ENCODE measurements at regions of chr11 and their contacts with region 1.

Region 1: DNA sequence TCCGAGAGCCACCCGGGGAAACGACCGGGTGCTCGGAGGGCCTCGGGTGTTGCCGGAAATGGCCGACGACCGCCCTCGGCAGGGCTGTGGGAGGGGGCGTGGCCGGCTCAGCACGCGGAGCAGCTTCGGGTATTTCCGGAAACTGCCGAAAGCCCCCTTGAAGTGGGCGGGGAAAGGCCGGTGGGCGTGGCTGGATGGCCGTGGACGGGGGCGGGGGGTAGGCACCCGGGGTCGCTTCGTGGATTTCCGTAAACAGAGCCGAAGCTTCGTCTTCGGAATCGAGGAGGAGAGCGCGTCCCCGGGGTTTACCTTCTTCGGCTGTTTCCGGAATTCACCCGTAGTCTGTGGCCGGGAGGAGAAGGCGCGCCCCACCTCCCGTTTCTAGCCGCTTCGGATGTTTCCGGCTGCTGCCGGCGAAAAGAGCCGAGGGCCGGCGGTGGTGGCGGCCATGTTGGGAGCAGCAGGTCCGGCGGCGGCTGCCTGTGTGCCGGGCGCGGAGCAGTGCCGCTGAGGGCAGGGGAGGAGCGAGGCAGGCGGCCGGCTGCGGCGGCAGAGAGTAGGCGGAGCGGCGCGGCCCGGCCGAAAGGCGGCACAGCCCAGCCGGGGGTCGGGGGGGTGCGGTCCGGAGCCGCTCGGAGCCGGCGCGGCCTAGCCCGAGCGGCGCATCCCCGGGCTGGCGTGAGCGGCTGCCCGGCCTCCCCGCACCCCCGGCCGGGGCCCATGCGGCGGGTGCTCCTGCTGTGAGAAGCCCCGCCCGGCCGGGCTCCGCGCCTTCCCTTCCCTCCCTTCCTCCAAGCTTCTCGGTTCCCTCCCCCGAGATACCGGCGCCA is at the start of gene MARK2:
- DNase-seq: peak; percentile 100
- H3K4me3 Mint-ChIP-seq: peak within 1 kb of the TSS; percentile 87
- H3K27ac Mint-ChIP-seq: peak within 1 kb of the TSS; percentile 85
- H3K4me1 Mint-ChIP-seq: peaks cover 49% of the 10 kb centered on the region
- H3K27me3 Mint-ChIP-seq: no peaks in the 10 kb centered on the region
- total RNA-seq, gene MARK2: 48.7 to 54.2 TPM

Region 2: DNA sequence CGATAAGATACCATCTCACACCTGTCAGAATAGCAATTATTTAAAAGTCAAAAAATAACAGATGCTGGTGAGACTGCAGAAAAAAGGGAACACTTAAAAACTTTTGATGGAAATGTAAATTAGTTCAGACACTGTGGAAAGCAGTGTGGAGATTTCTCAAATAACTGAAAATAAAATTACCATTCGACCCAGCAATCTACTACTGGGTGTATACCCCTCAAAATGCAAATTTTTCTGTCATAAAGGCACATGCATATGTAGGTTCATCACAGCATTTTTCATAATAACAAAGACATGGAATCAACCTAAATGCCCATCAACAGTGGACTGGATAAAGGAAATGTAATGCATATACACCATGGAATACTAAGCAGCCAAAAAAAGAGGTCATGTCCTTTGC is 458.8 kb before region 1 on chr11:
- CTCF ChIA-PET with region 1: no interaction called
- POLR2A ChIA-PET with region 1: no interaction called
- DNase-seq: no peak
- H3K4me3 Mint-ChIP-seq: no peak overlapping the region
- H3K27ac Mint-ChIP-seq: no peak overlapping the region
- H3K4me1 Mint-ChIP-seq: no peaks in the 10 kb centered on the region
- H3K27me3 Mint-ChIP-seq: peaks cover 30% of the 10 kb centered on the region

Region 3: GRCh38 chr11:63698976-63699733 is 139.7 kb before region 1 on chr11:
- CTCF ChIA-PET with region 1: no interaction called
- POLR2A ChIA-PET with region 1: no interaction called
- DNase-seq: no peak
- H3K4me3 Mint-ChIP-seq: no peak overlapping the region
- H3K27ac Mint-ChIP-seq: no peak overlapping the region
- H3K4me1 Mint-ChIP-seq: peaks cover 2% of the 10 kb centered on the region
- H3K27me3 Mint-ChIP-seq: no peaks in the 10 kb centered on the region

Region 4: DNA sequence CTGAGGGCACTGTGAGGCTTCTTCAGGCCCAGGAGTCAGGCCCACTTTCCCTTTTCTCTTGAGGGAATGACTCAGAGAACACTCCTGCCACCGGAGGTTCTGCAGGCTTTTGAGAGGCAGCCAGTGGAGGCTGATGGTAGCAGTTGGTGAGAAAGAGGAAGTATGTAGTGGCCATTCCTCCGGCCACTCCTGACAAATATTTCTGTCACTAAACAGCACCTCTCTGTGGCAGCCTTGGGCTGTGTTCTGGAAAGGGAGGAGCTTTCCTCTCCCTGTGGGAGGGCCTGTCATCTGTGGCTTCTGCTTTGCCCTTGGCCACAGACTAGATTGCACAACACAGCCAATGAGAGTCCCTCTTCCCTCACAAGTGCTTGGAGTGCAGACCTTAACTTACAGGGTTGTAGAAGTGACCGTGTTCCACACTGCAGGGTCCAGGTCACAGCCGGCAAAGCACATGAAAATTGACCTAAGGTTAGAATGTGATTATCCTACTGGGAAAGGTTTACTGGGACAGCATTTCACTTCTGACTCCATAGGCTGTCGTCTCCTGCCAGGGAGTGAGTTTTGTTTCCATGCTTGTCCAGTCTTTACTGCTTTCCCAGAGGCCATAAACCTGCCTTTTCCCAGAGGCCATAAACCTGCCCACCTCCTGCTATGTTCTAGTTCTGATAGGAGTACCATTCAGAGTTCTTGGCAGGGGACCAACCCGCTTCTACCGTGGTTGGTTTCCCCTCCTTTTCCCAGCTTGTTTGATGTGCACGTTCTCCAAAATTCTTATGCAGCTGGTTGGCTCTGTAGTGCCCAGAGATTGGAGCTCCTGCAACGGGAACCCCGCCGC is 33.3 kb after region 1 on chr11:
- CTCF ChIA-PET with region 1: interaction called, 16 read pairs
- POLR2A ChIA-PET with region 1: interaction called, 8 read pairs
- DNase-seq: peak; percentile 59
- H3K4me3 Mint-ChIP-seq: no peak overlapping the region
- H3K27ac Mint-ChIP-seq: no peak overlapping the region
- H3K4me1 Mint-ChIP-seq: peaks cover 63% of the 10 kb centered on the region
- H3K27me3 Mint-ChIP-seq: no peaks in the 10 kb centered on the region

Region 5: GRCh38 chr11:63906585-63906984 is 67.7 kb after region 1 on chr11:
- CTCF ChIA-PET with region 1: interaction called, 44 read pairs
- POLR2A ChIA-PET with region 1: interaction called, 5 read pairs
- DNase-seq: peak; percentile 53
- H3K4me3 Mint-ChIP-seq: no peak overlapping the region
- H3K27ac Mint-ChIP-seq: no peak overlapping the region
- H3K4me1 Mint-ChIP-seq: no peaks in the 10 kb centered on the region
- H3K27me3 Mint-ChIP-seq: no peaks in the 10 kb centered on the region

Region 6: GRCh38 chr11:63938479-63939396 is 99.8 kb after region 1 on chr11 and contains the start of gene NAA40:
- CTCF ChIA-PET with region 1: interaction called, 172 read pairs
- POLR2A ChIA-PET with region 1: interaction called, 6 read pairs
- DNase-seq: peak; percentile 94
- H3K4me3 Mint-ChIP-seq: peak within 1 kb of the TSS; percentile 81
- H3K27ac Mint-ChIP-seq: peak within 1 kb of the TSS; percentile 64
- H3K4me1 Mint-ChIP-seq: peaks cover 32% of the 10 kb centered on the region
- H3K27me3 Mint-ChIP-seq: no peaks in the 10 kb centered on the region
- total RNA-seq, gene NAA40: 28.9 to 31.1 TPM

Region 7: GRCh38 chr11:63951779-63952536 is 113.1 kb after region 1 on chr11:
- CTCF ChIA-PET with region 1: interaction called, 172 read pairs
- POLR2A ChIA-PET with region 1: interaction called, 31 read pairs
- DNase-seq: peak; percentile 72
- H3K4me3 Mint-ChIP-seq: peak overlapping the region; percentile 14
- H3K27ac Mint-ChIP-seq: peak overlapping the region; percentile 73
- H3K4me1 Mint-ChIP-seq: peaks cover 25% of the 10 kb centered on the region
- H3K27me3 Mint-ChIP-seq: no peaks in the 10 kb centered on the region

Region 8: DNA sequence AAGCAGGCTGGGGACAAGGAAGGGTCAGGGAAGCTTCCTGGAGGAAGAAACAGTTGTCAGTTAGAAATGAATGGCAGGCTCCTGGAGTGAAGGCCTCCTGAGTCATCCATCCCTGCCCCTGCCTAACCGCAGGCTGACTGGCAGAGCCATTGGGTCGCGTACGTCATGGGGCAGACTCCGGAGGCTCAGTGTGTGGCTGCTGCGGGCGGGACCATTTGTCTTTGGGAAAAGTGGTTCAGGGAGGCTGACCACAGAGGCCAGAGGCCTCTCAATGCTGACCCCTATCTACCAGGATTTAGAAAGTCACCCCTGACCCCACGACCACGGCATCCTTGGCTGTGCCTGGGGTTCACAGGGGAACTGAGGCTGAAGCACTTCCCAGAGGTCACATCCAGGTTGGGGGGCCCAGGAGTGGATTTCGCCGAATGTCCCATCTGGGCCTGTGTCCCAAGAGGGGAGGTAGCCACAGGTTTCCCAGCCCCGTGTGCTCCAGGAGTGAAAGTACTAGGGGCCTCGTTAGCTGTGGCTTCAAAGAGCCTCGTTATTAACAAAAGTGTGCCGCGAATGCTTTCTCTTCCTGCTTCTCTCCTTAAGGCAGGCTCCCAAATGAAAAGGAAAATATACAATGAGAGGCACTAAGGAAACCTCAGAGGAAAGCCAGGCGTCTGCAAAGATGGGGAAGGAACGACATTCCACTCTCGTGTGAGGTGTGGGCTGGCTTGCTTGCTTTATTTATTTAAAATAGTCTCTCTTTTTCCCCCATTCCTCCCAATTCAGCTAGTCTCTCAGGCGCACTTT is 255.8 kb after region 1 on chr11:
- CTCF ChIA-PET with region 1: no interaction called
- POLR2A ChIA-PET with region 1: no interaction called
- DNase-seq: no peak
- H3K4me3 Mint-ChIP-seq: no peak overlapping the region
- H3K27ac Mint-ChIP-seq: no peak overlapping the region
- H3K4me1 Mint-ChIP-seq: peaks cover 12% of the 10 kb centered on the region
- H3K27me3 Mint-ChIP-seq: no peaks in the 10 kb centered on the region

Region 9: GRCh38 chr11:64152841-64153691 is 314.2 kb after region 1 on chr11:
- CTCF ChIA-PET with region 1: interaction called, 22 read pairs
- POLR2A ChIA-PET with region 1: interaction called, 4 read pairs
- DNase-seq: peak; percentile 76
- H3K4me3 Mint-ChIP-seq: no peak overlapping the region
- H3K27ac Mint-ChIP-seq: no peak overlapping the region
- H3K4me1 Mint-ChIP-seq: no peaks in the 10 kb centered on the region
- H3K27me3 Mint-ChIP-seq: peaks cover 3% of the 10 kb centered on the region